WTC11 (cell line): ENCODE measurements at regions of chr7 and their contacts with region 1.

Region 1: DNA sequence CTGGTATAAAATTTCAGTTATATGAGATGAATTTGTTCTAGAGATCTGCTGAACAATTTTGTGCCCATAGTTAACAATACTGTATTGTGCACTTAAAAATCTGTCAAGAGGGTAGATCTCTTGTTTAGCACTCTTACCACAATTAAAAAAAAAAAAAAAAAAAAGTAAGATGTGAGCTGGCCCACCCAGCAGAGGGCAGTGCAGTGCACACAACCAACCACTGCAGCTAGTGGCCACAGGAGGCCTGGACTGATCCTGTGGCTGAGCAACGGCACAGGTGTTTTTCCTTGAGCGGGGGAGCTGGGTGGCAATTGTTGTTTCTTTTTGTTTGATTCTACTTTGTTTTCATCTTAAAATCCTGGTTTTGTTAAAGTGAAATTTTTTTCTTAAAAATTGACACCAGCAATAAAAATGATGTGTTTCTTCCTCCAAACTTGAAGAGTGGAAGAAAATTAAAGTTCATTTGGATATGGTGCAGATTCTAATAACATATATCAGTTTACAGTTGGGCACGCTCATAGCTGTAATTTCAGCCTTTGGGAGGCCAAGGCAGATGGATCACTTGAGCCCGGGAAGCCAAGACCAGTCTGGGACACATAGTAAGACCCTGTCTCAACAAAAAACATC is 171.1 kb upstream of the TBX20 start:
- DNase-seq: peak; percentile 61
- ATAC-seq: peak; percentile 82
- H3K4me3 Mint-ChIP-seq: no peak overlapping the region
- H3K27ac Mint-ChIP-seq: no peak overlapping the region
- H3K4me1 Mint-ChIP-seq: no peaks in the 10 kb centered on the region
- H3K27me3 Mint-ChIP-seq: peaks cover 18% of the 10 kb centered on the region
- CTCF ChIP-seq: peak; percentile 42; the same call in 1 of the 2 replicates

Region 2: GRCh38 chr7:35334516-35334915 is 90.5 kb before region 1 on chr7:
- CTCF ChIA-PET with region 1: no interaction called
- POLR2A ChIA-PET with region 1: no interaction called
- DNase-seq: no peak
- ATAC-seq: no peak
- H3K4me3 Mint-ChIP-seq: no peak overlapping the region
- H3K27ac Mint-ChIP-seq: no peak overlapping the region
- H3K4me1 Mint-ChIP-seq: no peaks in the 10 kb centered on the region
- H3K27me3 Mint-ChIP-seq: no peaks in the 10 kb centered on the region
- CTCF ChIP-seq: no peak

Region 3: DNA sequence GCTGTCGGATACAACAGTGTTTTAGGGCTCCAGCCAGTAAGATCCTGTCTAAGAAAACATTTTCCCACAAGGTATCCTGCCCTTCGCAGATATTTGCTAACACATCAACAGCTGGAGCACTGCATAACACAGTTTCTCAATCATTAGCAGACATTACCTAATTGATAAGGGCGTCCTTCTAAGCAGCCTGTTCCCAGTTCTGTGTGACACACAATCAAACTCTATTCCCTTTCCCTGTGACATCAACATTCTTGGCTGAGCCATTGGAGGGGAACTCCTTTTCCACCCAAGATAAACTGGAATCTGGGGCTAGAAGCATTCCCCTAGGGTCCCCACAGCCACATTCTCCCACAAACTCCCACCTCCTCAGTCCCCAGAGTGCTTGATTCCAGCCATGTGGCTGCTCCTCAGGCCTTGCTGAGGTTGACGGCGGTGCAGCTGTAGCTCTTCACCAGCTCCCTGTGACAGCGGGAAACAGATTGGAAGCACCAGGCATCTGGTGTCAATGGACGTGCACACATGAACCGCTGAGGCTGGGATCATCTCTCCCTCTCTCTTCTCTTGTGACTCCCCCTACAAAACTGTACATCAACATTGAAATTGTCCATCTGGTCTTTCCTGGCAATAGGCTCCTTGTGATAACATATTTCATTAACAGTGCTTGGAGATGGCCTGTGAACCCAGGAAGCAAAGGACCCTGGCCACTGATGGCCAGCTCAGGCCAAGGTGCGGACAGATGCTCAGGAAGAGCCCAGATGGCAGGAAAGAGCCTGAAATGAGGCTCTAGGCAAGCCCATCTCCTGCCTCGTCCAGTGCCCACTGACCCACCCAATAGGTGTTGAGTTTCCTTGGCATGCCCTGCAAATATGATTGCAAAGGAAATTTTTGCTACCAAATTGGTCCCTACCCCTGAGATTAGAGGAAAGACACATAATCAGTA is 40.0 kb before region 1 on chr7:
- CTCF ChIA-PET with region 1: no interaction called
- POLR2A ChIA-PET with region 1: no interaction called
- DNase-seq: no peak
- ATAC-seq: no peak
- H3K4me3 Mint-ChIP-seq: no peak overlapping the region
- H3K27ac Mint-ChIP-seq: no peak overlapping the region
- H3K4me1 Mint-ChIP-seq: no peaks in the 10 kb centered on the region
- H3K27me3 Mint-ChIP-seq: no peaks in the 10 kb centered on the region; the same call in 1 of the 2 replicates
- CTCF ChIP-seq: no peak

Region 4: GRCh38 chr7:35537067-35538023 is 112.4 kb after region 1 on chr7:
- CTCF ChIA-PET with region 1: interaction called, 12 read pairs
- POLR2A ChIA-PET with region 1: no interaction called
- DNase-seq: peak; percentile 84
- ATAC-seq: peak; percentile 96
- H3K4me3 Mint-ChIP-seq: peak overlapping the region; percentile 66
- H3K27ac Mint-ChIP-seq: no peak overlapping the region
- H3K4me1 Mint-ChIP-seq: 0 out of 2 replicates have a peak, but pooled peaks cover 3% of the 10 kb centered on the region
- H3K27me3 Mint-ChIP-seq: peaks cover 25% of the 10 kb centered on the region
- CTCF ChIP-seq: peak; percentile 88

Region 5: GRCh38 chr7:35624299-35625186 is 199.6 kb after region 1 on chr7:
- CTCF ChIA-PET with region 1: interaction called, 30 read pairs
- POLR2A ChIA-PET with region 1: no interaction called
- DNase-seq: peak; percentile 52
- ATAC-seq: peak; percentile 97
- H3K4me3 Mint-ChIP-seq: no peak overlapping the region
- H3K27ac Mint-ChIP-seq: no peak overlapping the region
- H3K4me1 Mint-ChIP-seq: peaks cover 17% of the 10 kb centered on the region
- H3K27me3 Mint-ChIP-seq: no peaks in the 10 kb centered on the region
- CTCF ChIP-seq: peak; percentile 69